Prostate gland (tissue), 2 donors: ENCODE measurements at regions of chr21 and their contacts with region 1.

Region 1: DNA sequence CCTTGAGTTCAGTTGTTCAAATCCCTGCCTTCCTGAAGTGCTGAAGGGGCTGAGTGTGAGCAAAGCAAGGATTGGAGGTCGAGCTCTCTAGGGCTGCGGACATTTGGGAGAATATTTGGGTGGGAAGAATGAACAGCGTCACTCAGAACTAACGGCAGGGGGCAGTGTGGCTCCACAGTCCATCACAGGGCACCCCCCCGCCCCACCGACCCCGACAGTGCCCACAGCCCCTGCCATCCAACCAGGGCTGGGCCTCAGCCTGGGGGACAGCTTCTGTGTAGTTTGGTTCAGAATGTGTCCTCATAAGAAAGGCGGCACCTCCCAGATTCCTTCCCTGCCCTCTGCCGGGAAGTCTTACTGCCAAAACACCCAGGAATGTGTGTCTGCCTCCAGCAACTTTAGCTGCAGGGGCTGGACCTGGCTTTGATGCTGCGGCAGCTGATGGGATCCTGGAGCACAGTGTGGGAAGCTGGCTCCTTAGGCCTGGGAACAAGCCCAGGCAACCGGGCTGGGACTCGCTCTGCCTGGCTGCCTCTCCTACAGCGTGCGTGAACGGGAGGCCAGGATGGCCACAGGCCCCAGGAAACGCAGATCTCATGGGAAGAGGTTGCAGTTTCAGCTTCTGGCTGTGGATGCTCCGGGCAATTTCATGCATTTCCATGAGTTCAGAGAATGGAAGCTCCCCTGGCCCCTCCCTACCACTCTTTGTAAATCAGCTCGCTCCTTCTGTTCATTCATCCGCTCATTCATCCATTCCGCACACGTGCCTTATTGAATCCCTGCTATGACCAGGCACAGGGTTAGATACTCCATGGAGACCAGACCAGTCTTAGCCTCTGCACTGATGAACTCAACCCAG is 104.9 kb upstream of the TMPRSS2 start:
- DNase-seq: peak; percentile 93
- H3K4me3 ChIP-seq: no peak overlapping the region
- H3K27ac ChIP-seq: peak overlapping the region; percentile 60 to 65
- H3K4me1 ChIP-seq: peaks cover 7% of the 10 kb centered on the region
- H3K27me3 ChIP-seq: no peaks in the 10 kb centered on the region
- CTCF ChIP-seq: peak; percentile 84 to 91 (median 84)
- POLR2A ChIP-seq: no peak

Region 2: GRCh38 chr21:41777951-41778874 is 165.3 kb after region 1 on chr21:
- intact Hi-C with region 1: loop called (anchors 1 kb)
- DNase-seq: peak; percentile 90
- H3K4me3 ChIP-seq: no peak overlapping the region
- H3K27ac ChIP-seq: peak overlapping the region; percentile 59 to 73
- H3K4me1 ChIP-seq: no peaks in the 10 kb centered on the region
- H3K27me3 ChIP-seq: no peaks in the 10 kb centered on the region
- CTCF ChIP-seq: peak; percentile 86 to 96 (median 90)
- POLR2A ChIP-seq: no peak

Region 3: DNA sequence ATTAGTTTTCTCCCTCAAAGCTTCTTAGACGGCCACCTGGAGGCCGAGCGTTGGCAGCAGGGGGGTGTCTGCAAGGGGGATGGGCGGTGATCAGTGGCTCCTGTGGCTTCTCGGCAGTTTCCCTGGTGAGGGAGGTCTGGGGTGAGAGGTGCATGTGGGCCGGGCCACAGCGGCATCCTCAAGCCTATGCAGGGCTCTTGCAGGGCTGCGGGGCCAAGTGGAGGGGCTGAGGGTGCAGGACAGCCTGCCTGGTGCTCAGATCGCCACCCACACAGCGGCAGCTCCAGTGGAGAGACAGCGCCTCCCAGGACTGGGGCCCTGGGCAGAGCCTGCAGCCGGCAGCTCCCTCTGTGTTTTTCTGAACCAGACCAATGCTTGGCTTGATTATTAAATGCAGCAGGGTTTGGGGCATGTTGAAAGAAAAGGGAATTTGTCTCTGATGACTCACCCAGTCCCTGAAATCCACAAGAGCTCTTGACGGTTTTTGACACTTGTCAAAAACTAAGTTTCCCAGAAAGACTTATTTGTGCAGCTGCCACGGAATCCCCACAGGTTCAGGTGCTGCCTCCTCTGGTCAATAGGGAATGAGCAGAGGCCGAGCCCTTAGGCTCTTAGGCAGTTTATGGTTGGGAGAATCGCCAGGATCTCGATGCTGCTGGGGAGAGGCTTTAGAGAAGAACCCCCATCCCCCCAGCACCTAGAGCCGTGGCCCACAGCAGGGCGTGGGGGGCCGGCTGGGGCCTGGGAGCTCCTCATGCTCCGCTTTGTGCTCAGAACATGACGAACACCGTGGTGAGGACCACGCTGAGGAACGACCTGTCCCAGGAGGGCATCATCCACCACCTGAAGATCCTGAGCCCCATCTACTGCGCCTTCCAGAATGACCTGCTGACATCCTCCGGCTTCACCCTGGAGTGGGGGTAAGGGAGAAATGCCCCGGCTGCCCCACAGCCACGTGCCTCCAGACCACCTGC is 513.0 kb after region 1 on chr21:
- intact Hi-C with region 1: loop called (anchors 10 kb)
- DNase-seq: no peak
- H3K4me3 ChIP-seq: no peak overlapping the region
- H3K27ac ChIP-seq: no peak overlapping the region
- H3K4me1 ChIP-seq: no peaks in the 10 kb centered on the region
- H3K27me3 ChIP-seq: no peaks in the 10 kb centered on the region
- CTCF ChIP-seq: no peak
- POLR2A ChIP-seq: no peak

Region 4: DNA sequence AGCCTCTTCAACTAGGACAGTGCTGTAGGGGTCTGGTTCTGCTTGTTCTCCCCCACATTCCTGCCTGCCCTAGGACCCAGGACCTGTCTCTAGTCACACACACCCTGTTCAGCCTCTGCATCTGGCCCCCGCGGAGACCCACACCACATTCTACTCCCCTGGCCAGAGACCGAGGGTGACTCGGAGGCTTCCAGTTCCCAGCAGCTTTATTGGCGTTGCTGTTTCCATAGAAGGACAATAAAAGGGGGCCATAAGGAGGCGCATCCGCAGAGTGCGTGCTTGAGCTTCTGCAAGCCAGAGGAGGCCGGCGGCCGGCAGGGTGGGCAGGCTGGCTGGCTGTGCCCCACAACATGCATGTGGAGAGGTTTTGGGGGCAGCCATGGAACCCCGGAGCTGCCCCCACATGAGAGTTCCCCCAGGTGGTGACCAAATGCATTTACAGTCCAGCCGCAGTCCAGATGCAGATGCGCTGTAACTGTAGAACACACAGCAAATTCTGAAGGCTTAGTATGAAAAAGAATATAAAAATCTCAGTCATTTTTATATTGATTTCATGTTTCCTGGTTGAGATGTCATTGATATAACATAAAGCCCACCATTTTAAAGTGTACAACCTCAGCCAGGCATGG is 1093.0 kb after region 1 on chr21:
- intact Hi-C with region 1: no loop called
- DNase-seq: no peak
- H3K4me3 ChIP-seq: no peak overlapping the region
- H3K27ac ChIP-seq: peak overlapping the region in 1 of 2 donors; percentile 22
- H3K4me1 ChIP-seq: no peaks in the 10 kb centered on the region
- H3K27me3 ChIP-seq: no peaks in the 10 kb centered on the region
- CTCF ChIP-seq: no peak
- POLR2A ChIP-seq: no peak